HepG2 (cell line): ENCODE measurements at regions of chr2 and their contacts with region 1.

Region 1: DNA sequence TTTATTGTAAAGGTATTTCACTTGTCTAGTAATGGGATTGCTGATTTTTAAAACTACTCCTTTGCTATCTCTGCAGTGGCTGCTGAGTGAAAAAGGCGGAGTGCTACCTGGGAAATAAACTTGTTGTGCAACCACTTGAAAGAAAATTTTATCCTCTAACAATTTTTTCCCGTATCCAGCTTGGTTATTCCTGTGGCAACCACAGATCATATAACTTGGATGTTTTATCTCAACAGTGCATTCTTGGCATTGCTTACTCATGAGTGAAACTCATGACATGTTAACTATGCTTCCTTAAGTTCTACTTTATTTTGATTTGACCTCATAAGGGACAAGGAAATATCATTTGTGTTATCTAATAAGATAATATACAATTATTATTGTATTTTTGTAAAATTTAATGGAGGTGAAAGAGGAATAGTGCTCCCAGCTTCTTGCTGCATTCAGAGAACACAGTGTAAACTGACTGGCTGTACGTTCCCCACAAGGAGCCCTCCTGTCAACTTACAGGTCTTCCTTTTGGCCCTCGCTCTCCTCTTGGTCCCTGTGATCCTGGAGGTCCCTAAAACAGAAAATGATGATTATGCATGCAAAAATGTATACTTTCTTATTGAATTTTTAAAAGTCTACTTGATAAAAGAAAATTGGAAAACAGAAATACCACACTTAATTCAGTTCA is 82.7 kb downstream of the COL5A2 start:
- DNase-seq: peak; percentile 47
- ATAC-seq: no peak
- H3K4me3 ChIP-seq: no peak overlapping the region
- H3K27ac ChIP-seq: no peak overlapping the region
- H3K4me1 ChIP-seq: no peaks in the 10 kb centered on the region
- H3K27me3 ChIP-seq: no peaks in the 10 kb centered on the region
- CTCF ChIP-seq: no peak
- EP300 ChIP-seq: no peak
- POLR2A ChIP-seq: no peak
- RAD21 ChIP-seq: no peak

Region 2: GRCh38 chr2:188902901-188903491 is 193.9 kb before region 1 on chr2:
- CTCF ChIA-PET with region 1: no interaction called
- POLR2A ChIA-PET with region 1: no interaction called
- in situ Hi-C with region 1: no loop called
- intact Hi-C with region 1: no loop called
- DNase-seq: no peak
- ATAC-seq: no peak
- H3K4me3 ChIP-seq: no peak overlapping the region
- H3K27ac ChIP-seq: no peak overlapping the region
- H3K4me1 ChIP-seq: no peaks in the 10 kb centered on the region
- H3K27me3 ChIP-seq: no peaks in the 10 kb centered on the region
- CTCF ChIP-seq: no peak
- EP300 ChIP-seq: no peak
- POLR2A ChIP-seq: no peak
- RAD21 ChIP-seq: no peak

Region 3: GRCh38 chr2:188983427-188984064 is 113.4 kb before region 1 on chr2:
- CTCF ChIA-PET with region 1: interaction called, 4 read pairs
- POLR2A ChIA-PET with region 1: no interaction called
- in situ Hi-C with region 1: no loop called
- intact Hi-C with region 1: loop called (anchors 1 kb)
- DNase-seq: peak; percentile 41
- ATAC-seq: peak; percentile 80
- H3K4me3 ChIP-seq: no peak overlapping the region
- H3K27ac ChIP-seq: no peak overlapping the region
- H3K4me1 ChIP-seq: no peaks in the 10 kb centered on the region
- H3K27me3 ChIP-seq: no peaks in the 10 kb centered on the region
- CTCF ChIP-seq: peak; percentile 47
- EP300 ChIP-seq: no peak
- POLR2A ChIP-seq: no peak
- RAD21 ChIP-seq: no peak

Region 4: GRCh38 chr2:189024901-189025618 is 71.8 kb before region 1 on chr2:
- CTCF ChIA-PET with region 1: interaction called, 3 read pairs
- POLR2A ChIA-PET with region 1: no interaction called
- in situ Hi-C with region 1: no loop called
- intact Hi-C with region 1: loop called (anchors 5 kb)
- DNase-seq: peak; percentile 18
- ATAC-seq: peak; percentile 67
- H3K4me3 ChIP-seq: no peak overlapping the region
- H3K27ac ChIP-seq: no peak overlapping the region
- H3K4me1 ChIP-seq: no peaks in the 10 kb centered on the region
- H3K27me3 ChIP-seq: no peaks in the 10 kb centered on the region
- CTCF ChIP-seq: peak; percentile 29; the same call in 1 of the 2 replicates
- EP300 ChIP-seq: no peak
- POLR2A ChIP-seq: no peak
- RAD21 ChIP-seq: peak; percentile 31; the same call in 1 of the 2 replicates

Region 5: GRCh38 chr2:189142893-189143759 is 46.2 kb after region 1 on chr2:
- CTCF ChIA-PET with region 1: no interaction called
- POLR2A ChIA-PET with region 1: no interaction called
- in situ Hi-C with region 1: no loop called
- intact Hi-C with region 1: loop called (anchors 1 kb)
- DNase-seq: peak; percentile 76
- ATAC-seq: peak; percentile 100
- H3K4me3 ChIP-seq: no peak overlapping the region
- H3K27ac ChIP-seq: no peak overlapping the region
- H3K4me1 ChIP-seq: no peaks in the 10 kb centered on the region
- H3K27me3 ChIP-seq: no peaks in the 10 kb centered on the region
- CTCF ChIP-seq: peak; percentile 87
- EP300 ChIP-seq: no peak
- POLR2A ChIP-seq: no peak
- RAD21 ChIP-seq: peak; percentile 79

Region 6: GRCh38 chr2:189287982-189288521 is 191.1 kb after region 1 on chr2:
- CTCF ChIA-PET with region 1: interaction called, 7 read pairs
- POLR2A ChIA-PET with region 1: no interaction called
- in situ Hi-C with region 1: loop called (anchors 5 kb)
- intact Hi-C with region 1: loop called (anchors 1 kb)
- DNase-seq: peak; percentile 49
- ATAC-seq: peak; percentile 72
- H3K4me3 ChIP-seq: no peak overlapping the region
- H3K27ac ChIP-seq: no peak overlapping the region
- H3K4me1 ChIP-seq: no peaks in the 10 kb centered on the region
- H3K27me3 ChIP-seq: no peaks in the 10 kb centered on the region
- CTCF ChIP-seq: peak; percentile 59
- EP300 ChIP-seq: no peak
- POLR2A ChIP-seq: no peak
- RAD21 ChIP-seq: peak; percentile 36; the same call in 1 of the 2 replicates